GM10248 (cell line): ENCODE measurements at regions of chr15 and their contacts with region 1.

Region 1: DNA sequence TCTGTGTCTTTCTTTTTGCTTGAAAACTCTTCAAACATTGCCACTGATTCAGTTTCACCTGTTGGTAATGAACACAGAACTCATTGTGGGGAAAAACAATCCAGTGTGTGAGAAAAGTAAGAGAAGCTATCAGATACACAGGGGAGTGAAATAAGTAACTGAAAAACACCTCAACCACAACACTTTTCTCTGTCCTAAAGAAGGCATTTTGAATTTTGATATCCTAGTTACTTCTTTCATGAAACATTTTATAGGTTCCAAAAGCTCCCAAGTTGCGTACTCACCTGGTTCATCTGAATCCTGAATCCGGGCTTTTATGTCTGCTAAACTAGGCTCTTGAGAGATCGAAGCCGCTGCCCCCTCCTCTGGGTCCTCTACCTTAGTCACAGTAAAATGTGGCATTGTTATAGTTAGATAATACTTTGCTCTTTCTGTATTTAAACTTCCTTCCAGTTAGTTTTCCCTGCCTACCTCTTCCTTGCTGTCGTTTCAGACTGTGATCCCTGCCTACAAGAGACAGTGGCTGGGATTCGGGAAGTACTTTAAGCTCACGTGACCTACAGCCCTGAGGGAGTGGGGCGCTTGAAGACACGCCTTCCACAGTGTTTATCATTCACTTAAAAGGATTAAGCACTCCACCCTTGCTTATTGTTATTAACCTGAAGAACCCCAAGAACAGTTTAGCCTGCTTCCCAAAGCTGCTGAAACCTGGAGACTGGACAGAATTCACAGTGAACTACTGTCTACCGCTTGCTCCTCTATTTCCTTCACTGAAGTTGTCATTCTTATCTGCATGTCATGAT is 19.1 kb downstream of the SLC12A6 start:
- DNase-seq: peak; percentile 39
- CTCF ChIP-seq: no peak

Region 2: DNA sequence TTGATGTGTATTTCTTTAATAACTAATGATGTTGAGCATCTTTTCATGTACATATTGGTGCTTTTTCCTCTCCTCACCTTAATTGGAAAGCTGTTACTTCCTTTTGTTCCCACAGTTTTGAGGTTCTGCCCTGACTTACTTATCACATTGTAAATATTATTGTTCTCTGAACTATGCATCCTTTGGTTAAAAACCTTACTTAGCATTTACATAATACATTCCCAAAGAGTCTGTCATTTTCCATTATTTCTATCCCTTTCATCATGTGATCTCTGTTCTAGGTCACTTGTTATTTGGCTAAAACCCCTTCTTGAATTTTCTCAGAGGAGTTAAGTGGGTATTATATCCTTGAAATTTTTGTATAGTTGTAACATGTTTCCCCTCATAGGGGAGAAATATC is 13.9 kb before region 1 on chr15:
- CTCF ChIA-PET with region 1: interaction called, 10 read pairs
- POLR2A ChIA-PET with region 1: no interaction called
- DNase-seq: no peak
- CTCF ChIP-seq: no peak

Region 3: DNA sequence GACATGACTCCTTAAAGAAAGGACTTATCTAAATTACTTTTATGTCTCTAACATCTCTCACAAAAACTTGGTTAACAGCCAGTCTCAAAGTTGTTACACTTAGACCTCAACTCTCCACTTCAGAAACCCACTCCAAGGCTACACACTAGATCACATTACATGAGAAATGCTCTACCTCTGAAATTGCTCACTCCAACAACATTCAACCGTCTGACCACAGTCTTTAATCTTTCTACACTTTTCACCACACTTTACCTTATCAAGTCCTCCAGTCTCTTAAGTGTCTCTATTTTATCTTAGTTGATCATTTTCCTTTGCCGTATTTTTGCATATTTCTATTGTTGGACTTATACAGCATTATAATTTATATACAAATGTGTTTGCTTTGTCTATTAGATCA is 13.3 kb after region 1 on chr15:
- CTCF ChIA-PET with region 1: interaction called, 29 read pairs
- POLR2A ChIA-PET with region 1: interaction called, 9 read pairs
- DNase-seq: no peak
- CTCF ChIP-seq: no peak

Region 4: GRCh38 chr15:34655326-34655725 is 336.8 kb after region 1 on chr15:
- CTCF ChIA-PET with region 1: no interaction called
- POLR2A ChIA-PET with region 1: no interaction called
- DNase-seq: no peak
- CTCF ChIP-seq: no peak